B cell (primary cell): ENCODE measurements at regions of chr2 and their contacts with region 1.

Region 1: DNA sequence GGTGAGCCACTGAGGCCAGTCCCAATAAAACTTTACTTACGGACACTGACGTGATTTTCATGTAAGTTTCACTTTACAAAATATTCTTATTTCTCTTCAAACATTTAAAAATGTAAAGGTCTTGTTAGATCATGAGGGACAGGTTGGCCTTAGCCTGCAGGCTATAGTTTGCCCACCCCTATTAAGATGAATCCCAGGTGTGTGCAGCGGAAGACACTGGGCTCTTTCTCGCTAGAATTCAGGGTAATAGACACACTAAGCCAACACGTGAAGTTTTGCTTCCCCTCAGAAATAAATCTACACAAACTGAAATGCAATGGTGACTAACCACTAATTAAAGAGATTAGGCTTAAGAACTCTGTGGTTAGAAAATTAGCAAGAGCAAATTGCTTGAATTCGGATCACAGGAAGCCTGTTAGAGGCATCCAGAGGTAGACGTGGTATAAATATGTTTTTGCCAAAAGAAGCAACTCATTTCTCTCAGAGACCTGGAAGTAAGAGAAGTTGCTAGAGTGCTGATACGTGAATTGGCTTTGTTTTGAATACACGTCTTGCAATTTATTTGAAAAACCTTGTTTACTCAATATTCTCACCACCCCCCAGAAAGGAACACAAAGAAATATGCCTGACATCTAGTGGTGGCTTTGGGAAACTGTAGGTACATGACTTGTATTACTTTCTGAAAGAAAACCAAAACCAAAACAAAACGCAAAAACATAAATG is 151.6 kb downstream of the DTNB start:
- DNase-seq: peak; percentile 87
- ATAC-seq: peak; percentile 100
- H3K4me3 ChIP-seq: peak overlapping the region in 2 of 5 experiments; percentile 19 to 35
- H3K4me3 Mint-ChIP-seq: peak overlapping the region; percentile 3
- H3K27ac ChIP-seq: no peak overlapping the region
- H3K27ac Mint-ChIP-seq: no peak overlapping the region
- H3K4me1 ChIP-seq: peaks cover 7 to 16% of the 10 kb centered on the region in 2 donors
- H3K4me1 Mint-ChIP-seq: peaks cover 19% of the 10 kb centered on the region
- H3K27me3 ChIP-seq: no peaks in the 10 kb centered on the region
- H3K27me3 Mint-ChIP-seq: no peaks in the 10 kb centered on the region
- CTCF ChIP-seq: peak; percentile 84

Region 2: DNA sequence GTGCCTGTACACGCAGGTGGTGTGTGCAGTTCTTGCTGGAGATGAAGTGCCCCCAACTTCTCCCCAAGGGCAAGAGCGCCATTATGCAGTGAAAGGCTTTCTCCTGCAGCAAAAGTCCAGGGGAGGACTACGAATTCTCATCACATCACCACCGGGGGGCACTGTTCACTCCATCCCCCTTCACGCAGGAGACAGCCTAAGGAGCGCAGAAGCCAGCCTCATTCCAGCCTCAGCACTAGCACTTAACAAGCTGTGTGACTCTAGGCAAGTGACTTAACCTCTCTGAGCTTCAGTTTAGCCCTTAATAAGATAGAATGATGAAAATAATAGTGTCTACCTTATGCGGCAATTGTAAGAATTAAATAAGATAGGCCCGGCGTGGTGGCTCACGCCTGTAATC is 212.4 kb before region 1 on chr2:
- CTCF ChIA-PET with region 1: interaction called, 5 read pairs
- POLR2A ChIA-PET with region 1: no interaction called
- intact Hi-C with region 1: loop called (anchors 1 kb)
- DNase-seq: peak; percentile 75
- ATAC-seq: peak; percentile 63
- H3K4me3 ChIP-seq: no peak overlapping the region
- H3K4me3 Mint-ChIP-seq: no peak overlapping the region
- H3K27ac ChIP-seq: no peak overlapping the region
- H3K27ac Mint-ChIP-seq: no peak overlapping the region
- H3K4me1 ChIP-seq: peaks cover 5% of the 10 kb centered on the region in 2 donors
- H3K4me1 Mint-ChIP-seq: peaks cover 20% of the 10 kb centered on the region
- H3K27me3 ChIP-seq: no peaks in the 10 kb centered on the region
- H3K27me3 Mint-ChIP-seq: no peaks in the 10 kb centered on the region
- CTCF ChIP-seq: peak; percentile 68

Region 3: GRCh38 chr2:25342372-25343186 is 179.2 kb before region 1 on chr2:
- CTCF ChIA-PET with region 1: interaction called, 4 read pairs
- POLR2A ChIA-PET with region 1: no interaction called
- intact Hi-C with region 1: loop called (anchors 1 kb)
- DNase-seq: peak; percentile 90
- ATAC-seq: peak; percentile 91
- H3K4me3 ChIP-seq: peak overlapping the region in 4 of 5 experiments; percentile 37 to 70 (median 55)
- H3K4me3 Mint-ChIP-seq: peak overlapping the region; percentile 85
- H3K27ac ChIP-seq: no peak overlapping the region
- H3K27ac Mint-ChIP-seq: peak overlapping the region; percentile 87
- H3K4me1 ChIP-seq: peaks cover 8 to 10% of the 10 kb centered on the region in 2 donors
- H3K4me1 Mint-ChIP-seq: peaks cover 20% of the 10 kb centered on the region
- H3K27me3 ChIP-seq: peaks cover 0 to 4% (median 1%) of the 10 kb centered on the region in 4 experiments
- H3K27me3 Mint-ChIP-seq: no peaks in the 10 kb centered on the region
- CTCF ChIP-seq: peak; percentile 96

Region 4: GRCh38 chr2:25411281-25411680 is 110.5 kb before region 1 on chr2:
- CTCF ChIA-PET with region 1: no interaction called
- POLR2A ChIA-PET with region 1: no interaction called
- intact Hi-C with region 1: loop called (anchors 1 kb)
- DNase-seq: peak; percentile 68
- ATAC-seq: peak; percentile 68
- H3K4me3 ChIP-seq: peak overlapping the region in 1 of 5 experiments; percentile 37
- H3K4me3 Mint-ChIP-seq: peak overlapping the region; percentile 62
- H3K27ac ChIP-seq: peak overlapping the region; percentile 58 to 68
- H3K27ac Mint-ChIP-seq: peak overlapping the region; percentile 86
- H3K4me1 ChIP-seq: peaks cover 46 to 61% of the 10 kb centered on the region in 2 donors
- H3K4me1 Mint-ChIP-seq: peaks cover 58% of the 10 kb centered on the region
- H3K27me3 ChIP-seq: no peaks in the 10 kb centered on the region
- H3K27me3 Mint-ChIP-seq: no peaks in the 10 kb centered on the region
- CTCF ChIP-seq: no peak

Region 5: DNA sequence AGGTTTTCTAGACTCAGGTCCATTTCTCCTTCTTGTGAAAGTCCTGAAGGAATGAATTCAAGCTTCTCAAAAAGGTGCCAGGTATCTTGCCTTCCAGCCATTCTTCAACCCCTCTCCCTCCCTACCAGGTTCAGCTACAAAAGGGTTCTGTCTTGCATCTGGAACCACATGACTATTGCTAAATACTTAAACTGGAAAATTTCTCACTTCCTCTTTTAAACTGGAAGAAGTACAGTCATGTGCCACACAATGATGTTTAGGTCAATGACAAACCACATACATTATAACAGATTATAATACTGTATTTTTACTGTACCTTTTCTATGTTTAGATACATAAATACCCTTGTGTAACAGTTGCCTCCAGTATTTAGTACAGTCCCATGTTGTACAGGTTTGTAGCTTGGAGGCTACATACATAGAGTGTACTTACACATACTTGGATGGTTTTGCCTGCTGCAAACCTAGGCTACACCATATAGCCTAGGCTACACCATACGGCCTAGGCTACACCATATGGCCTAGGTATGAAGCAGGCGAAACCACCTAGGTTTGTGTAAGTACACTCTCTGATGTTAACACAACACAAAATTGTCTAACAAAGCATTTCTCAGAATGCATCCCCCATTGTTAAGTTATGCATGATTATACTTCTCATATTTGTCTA is 38.1 kb before region 1 on chr2:
- CTCF ChIA-PET with region 1: no interaction called
- POLR2A ChIA-PET with region 1: no interaction called
- intact Hi-C with region 1: loop called (anchors 5 kb)
- DNase-seq: peak; percentile 70
- ATAC-seq: peak; percentile 83
- H3K4me3 ChIP-seq: no peak overlapping the region
- H3K4me3 Mint-ChIP-seq: peak overlapping the region; percentile 37
- H3K27ac ChIP-seq: peak overlapping the region; percentile 28 to 37
- H3K27ac Mint-ChIP-seq: peak overlapping the region; percentile 80
- H3K4me1 ChIP-seq: peaks cover 20 to 24% of the 10 kb centered on the region in 2 donors
- H3K4me1 Mint-ChIP-seq: peaks cover 34% of the 10 kb centered on the region
- H3K27me3 ChIP-seq: no peaks in the 10 kb centered on the region
- H3K27me3 Mint-ChIP-seq: no peaks in the 10 kb centered on the region
- CTCF ChIP-seq: no peak

Region 6: GRCh38 chr2:25558262-25558661 is 36.4 kb after region 1 on chr2:
- CTCF ChIA-PET with region 1: no interaction called
- POLR2A ChIA-PET with region 1: no interaction called
- intact Hi-C with region 1: loop called (anchors 5 kb)
- DNase-seq: peak; percentile 19
- ATAC-seq: peak; percentile 78
- H3K4me3 ChIP-seq: no peak overlapping the region
- H3K4me3 Mint-ChIP-seq: peak overlapping the region; percentile 24
- H3K27ac ChIP-seq: no peak overlapping the region
- H3K27ac Mint-ChIP-seq: no peak overlapping the region
- H3K4me1 ChIP-seq: peaks cover 24 to 28% of the 10 kb centered on the region in 2 donors
- H3K4me1 Mint-ChIP-seq: peaks cover 33% of the 10 kb centered on the region
- H3K27me3 ChIP-seq: no peaks in the 10 kb centered on the region
- H3K27me3 Mint-ChIP-seq: no peaks in the 10 kb centered on the region
- CTCF ChIP-seq: no peak